Heart right ventricle (tissue), 16 donors: ENCODE measurements at regions of chr5 and their contacts with region 1.

Region 1: DNA sequence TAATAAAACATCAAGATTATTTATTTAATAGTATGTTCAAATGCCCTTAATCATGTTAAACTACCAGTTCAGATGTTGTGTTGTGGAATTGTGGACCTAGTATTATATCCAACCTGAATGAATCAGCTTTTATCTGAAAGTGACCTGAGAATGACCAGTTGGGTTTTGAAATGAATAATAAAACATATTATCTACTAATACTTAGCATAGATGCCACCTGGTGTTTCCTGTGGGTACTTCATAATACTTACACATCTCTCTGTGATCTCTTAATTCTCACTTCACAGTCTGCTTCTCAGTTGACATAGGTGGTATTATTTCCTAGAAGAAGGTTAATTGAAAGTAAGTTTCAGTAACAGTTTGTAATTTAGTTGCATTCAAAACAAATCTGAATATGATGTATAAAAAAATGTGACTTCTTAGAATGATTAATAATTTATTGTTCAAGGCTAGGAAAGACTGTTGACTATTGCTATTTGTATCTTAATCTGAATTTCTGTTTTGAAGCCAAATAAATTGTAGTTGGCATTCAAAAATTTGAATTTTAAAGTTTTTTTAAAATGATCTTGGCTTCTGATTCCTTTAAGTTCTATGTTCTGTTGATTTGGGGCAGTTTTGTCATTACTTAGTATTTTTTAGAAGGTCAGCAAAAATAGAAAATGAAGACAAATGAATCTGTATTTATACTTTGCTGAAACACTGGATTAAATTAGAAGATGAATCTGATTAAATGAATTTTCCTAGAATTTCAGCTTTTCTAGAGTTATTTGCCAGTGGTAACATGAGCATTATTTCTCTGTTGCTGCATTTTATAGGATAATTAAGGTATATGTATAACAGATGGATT is 48.2 kb downstream of the KIF2A start:
- DNase-seq: peak in 1 of 2 donors; percentile 17
- ATAC-seq: peak in 3 of 8 donors; percentile 42 to 59 (median 59)
- H3K4me3 ChIP-seq: no peak overlapping the region
- H3K27ac ChIP-seq: no peak overlapping the region
- H3K4me1 ChIP-seq: no peaks in the 10 kb centered on the region
- H3K27me3 ChIP-seq: no peaks in the 10 kb centered on the region
- CTCF ChIP-seq: peak; percentile 48 to 74 (median 64)

Region 2: DNA sequence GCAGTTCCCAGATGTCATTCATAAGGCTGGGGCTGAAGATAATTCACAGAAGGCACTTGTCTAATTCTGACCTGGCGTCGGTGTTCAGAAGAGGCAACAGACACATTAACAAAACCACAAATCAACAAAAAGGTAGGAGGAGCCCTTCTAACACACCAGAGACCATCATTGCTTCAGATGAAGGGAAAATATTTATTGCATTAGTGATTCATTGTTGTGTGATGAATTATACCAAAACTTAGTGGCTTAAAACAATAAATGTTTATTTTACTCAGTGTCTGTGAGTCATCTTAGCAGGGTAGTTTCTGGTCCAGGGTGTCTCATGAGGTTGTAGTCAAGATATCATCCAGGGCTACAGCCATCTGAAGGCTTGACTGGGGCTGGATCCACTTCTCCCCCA is 139.6 kb before region 1 on chr5:
- intact Hi-C with region 1: loop called in 1 of 10 experiments (anchors 10 kb)
- DNase-seq: no peak
- ATAC-seq: no peak
- H3K4me3 ChIP-seq: no peak overlapping the region
- H3K27ac ChIP-seq: no peak overlapping the region
- H3K4me1 ChIP-seq: no peaks in the 10 kb centered on the region
- H3K27me3 ChIP-seq: peaks cover 0 to 24% (median 4%) of the 10 kb centered on the region in 7 donors
- CTCF ChIP-seq: no peak

Region 3: GRCh38 chr5:62231576-62231975 is 122.7 kb before region 1 on chr5:
- intact Hi-C with region 1: loop called in 1 of 10 experiments (anchors 5 kb)
- DNase-seq: no peak
- ATAC-seq: no peak
- H3K4me3 ChIP-seq: no peak overlapping the region
- H3K27ac ChIP-seq: no peak overlapping the region
- H3K4me1 ChIP-seq: peaks cover 0 to 4% (median 0%) of the 10 kb centered on the region in 9 donors
- H3K27me3 ChIP-seq: no peaks in the 10 kb centered on the region
- CTCF ChIP-seq: no peak